ENCODE measurements at regions of chr3 and their contacts with region 1.

Region 1: DNA sequence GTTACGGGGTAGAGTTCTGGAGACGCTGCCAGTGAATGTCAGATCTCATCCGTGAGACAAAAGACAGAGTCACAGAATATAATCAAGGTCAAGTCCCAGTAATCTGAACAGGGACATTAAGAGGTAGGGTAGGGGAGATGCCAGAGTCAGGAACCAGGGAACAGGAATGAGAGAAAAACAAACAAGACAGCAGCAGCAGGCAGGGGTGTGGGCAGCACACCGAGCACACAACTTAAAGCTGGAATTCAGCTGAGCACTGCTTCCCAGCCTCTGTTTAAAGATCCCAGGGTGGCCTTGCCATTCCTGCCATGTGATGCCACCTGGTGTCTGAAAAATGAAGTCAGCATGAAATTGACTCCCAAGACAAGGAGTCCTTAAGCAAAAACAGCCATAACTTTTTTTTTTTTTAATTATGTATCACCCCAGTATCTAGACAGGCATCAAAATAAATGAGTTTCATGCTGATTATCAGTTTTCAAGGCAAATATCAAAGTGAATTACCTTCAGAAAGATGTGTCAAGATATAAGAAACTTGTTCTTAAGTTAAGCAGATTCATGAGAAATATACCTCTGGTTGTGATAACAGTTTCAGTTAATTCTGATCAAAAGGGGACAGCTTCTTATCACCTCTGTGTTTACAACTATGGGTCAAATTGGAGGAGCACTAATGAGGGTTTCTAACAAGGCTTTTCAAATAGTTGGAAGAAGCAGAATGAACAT is 203.7 kb downstream of the SLC9A9 start:
- DNase-seq: peak; percentile 27
- H3K4me3 Mint-ChIP-seq: no peak overlapping the region
- H3K27ac Mint-ChIP-seq: no peak overlapping the region
- H3K4me1 Mint-ChIP-seq: no peaks in the 10 kb centered on the region
- H3K27me3 Mint-ChIP-seq: no peaks in the 10 kb centered on the region

Region 2: GRCh38 chr3:143433787-143434378 is 210.6 kb before region 1 on chr3:
- CTCF ChIA-PET with region 1: interaction called, 12 read pairs
- POLR2A ChIA-PET with region 1: no interaction called
- intact Hi-C with region 1: loop called (anchors 5 kb)
- DNase-seq: peak; percentile 53
- H3K4me3 Mint-ChIP-seq: no peak overlapping the region
- H3K27ac Mint-ChIP-seq: no peak overlapping the region
- H3K4me1 Mint-ChIP-seq: no peaks in the 10 kb centered on the region
- H3K27me3 Mint-ChIP-seq: no peaks in the 10 kb centered on the region

Measured in activated CD4-positive, alpha-beta memory T cell treated with anti-CD3 and anti-CD28 coated beads for 36 hours (primary cell).